ENCODE measurements at regions of chr14 and their contacts with region 1.

Region 1: DNA sequence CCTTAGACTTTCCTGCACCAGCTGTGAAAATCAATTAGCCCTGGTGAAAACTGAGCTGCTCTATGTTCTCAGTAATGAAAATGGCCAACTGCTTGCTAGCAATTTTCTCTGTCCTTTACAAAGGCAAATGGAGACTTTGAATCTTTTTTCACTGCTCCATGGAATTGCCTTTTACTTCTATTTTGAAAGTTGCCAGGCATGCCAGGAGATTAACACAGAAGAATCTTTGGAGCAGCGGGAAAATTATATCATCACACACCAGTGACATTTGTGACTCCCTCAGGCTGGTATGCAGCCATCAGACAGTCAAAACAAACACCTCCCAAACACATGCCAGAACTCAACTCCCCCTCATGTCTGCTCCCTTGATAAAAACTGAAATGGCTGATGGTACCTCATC is 872.0 kb upstream of the FLRT2 start:
- DNase-seq: no peak
- ATAC-seq: no peak
- H3K4me3 ChIP-seq: no peak overlapping the region
- H3K27ac ChIP-seq: no peak overlapping the region
- H3K4me1 ChIP-seq: no peaks in the 10 kb centered on the region
- H3K27me3 ChIP-seq: no peaks in the 10 kb centered on the region
- CTCF ChIP-seq: no peak
- POLR2A ChIP-seq: no peak

Region 2: DNA sequence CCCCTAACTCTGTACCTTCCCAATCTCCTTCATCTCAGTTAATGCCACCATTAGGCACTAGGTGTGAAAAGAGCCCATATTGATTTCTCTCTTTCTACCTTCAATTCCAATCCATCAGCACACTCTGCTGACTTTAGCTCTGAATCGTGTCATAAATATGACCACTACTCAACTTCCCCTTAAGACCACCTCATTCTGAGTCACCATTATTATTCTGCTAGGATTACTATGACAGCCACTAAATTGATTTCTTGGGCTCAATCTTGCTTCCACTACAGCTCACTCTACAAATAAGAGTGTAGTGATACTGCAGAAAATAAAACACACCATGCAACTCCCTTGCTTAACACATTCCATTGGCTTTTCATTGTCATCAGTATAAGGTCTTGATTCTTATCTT is 577.0 kb before region 1 on chr14:
- in situ Hi-C with region 1: no loop called
- intact Hi-C with region 1: loop called (anchors 5 kb)
- DNase-seq: no peak
- ATAC-seq: no peak
- H3K4me3 ChIP-seq: no peak overlapping the region
- H3K27ac ChIP-seq: no peak overlapping the region
- H3K4me1 ChIP-seq: no peaks in the 10 kb centered on the region
- H3K27me3 ChIP-seq: no peaks in the 10 kb centered on the region
- CTCF ChIP-seq: no peak
- POLR2A ChIP-seq: no peak

Measured in gastrocnemius medialis (tissue), 4 donors.